ENCODE measurements at regions of chr6 and their contacts with region 1.

Region 1: DNA sequence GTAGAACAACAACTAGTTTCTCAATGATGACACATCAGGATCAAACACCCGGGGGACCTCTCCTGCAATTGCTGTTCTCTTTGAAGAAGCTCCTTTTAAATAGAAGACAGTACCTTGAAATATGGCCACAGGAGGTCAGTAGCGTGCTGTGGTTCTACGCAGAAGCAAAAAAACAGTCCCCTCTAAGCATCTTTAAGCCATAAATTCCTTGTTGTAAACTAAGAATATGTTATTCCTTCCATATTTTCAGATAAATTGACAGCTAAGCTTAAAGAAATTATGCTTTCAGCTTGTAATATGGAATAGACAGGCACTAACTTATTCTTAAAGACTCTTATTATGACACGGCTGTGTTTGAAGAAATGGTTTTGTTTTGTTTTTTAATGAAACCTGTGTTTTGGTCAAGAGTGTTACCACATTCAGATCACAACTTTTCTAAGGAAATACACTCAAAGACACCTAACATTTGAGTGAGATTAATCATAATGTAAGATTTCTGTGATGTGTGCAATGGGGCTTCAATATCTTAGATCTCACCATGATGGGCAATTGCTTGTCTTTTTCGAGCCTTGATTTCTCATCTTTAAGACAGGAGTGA is 49.7 kb upstream of the IL20RA start:
- DNase-seq: peak; percentile 73
- ATAC-seq: peak; percentile 76
- H3K4me3 Mint-ChIP-seq: no peak overlapping the region
- H3K27ac Mint-ChIP-seq: no peak overlapping the region
- H3K4me1 Mint-ChIP-seq: peaks cover 17% of the 10 kb centered on the region
- H3K27me3 Mint-ChIP-seq: peaks cover 2% of the 10 kb centered on the region

Region 2: DNA sequence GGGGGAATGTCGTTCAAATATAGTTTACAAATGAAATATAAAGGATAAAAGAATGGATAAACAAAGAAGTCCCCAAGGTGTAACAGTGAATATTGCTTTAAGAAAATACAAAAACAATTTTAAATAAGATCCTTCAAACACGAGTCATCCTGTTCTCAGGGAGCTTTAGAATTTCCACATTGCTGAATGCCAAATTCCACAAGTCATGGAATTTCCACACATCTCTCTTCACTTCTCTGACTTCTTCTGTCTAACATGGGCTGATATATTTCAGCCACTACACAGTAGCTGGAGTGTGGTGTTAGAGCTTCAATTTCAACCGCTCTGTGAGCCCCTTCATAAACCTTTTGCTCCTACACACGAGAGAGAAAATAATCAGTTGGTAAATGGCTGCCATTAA is 50.9 kb after region 1 on chr6:
- CTCF ChIA-PET with region 1: no interaction called
- POLR2A ChIA-PET with region 1: no interaction called
- intact Hi-C with region 1: no loop called
- DNase-seq: no peak
- ATAC-seq: no peak
- H3K4me3 Mint-ChIP-seq: no peak overlapping the region
- H3K27ac Mint-ChIP-seq: no peak overlapping the region
- H3K4me1 Mint-ChIP-seq: peaks cover 3% of the 10 kb centered on the region
- H3K27me3 Mint-ChIP-seq: peaks cover 3% of the 10 kb centered on the region

Region 3: DNA sequence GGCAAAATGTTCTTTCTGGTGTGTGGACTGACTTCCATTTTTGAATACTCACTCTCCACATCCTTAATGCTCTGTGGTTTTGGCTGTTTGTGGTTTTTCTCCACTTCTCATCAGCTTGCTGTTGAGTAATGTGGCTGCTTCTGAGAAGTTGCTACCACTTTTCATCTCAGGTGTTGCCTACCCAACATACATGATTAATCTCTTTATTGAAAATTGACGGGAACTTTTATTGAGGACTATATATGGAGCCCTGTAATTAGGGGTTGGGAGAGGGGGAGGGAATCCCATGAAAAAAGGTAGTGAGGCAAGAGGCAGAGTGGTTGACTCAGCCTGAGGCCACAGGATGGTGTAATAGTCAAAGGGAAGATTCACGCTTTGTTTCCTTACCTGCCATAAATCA is 61.3 kb after region 1 on chr6:
- CTCF ChIA-PET with region 1: no interaction called
- POLR2A ChIA-PET with region 1: no interaction called
- intact Hi-C with region 1: loop called in 1 of 2 experiments (anchors 5 kb)
- DNase-seq: peak; percentile 54
- ATAC-seq: peak; percentile 96
- H3K4me3 Mint-ChIP-seq: no peak overlapping the region
- H3K27ac Mint-ChIP-seq: peak overlapping the region; percentile 44
- H3K4me1 Mint-ChIP-seq: peaks cover 16% of the 10 kb centered on the region
- H3K27me3 Mint-ChIP-seq: peaks cover 21% of the 10 kb centered on the region

Region 4: DNA sequence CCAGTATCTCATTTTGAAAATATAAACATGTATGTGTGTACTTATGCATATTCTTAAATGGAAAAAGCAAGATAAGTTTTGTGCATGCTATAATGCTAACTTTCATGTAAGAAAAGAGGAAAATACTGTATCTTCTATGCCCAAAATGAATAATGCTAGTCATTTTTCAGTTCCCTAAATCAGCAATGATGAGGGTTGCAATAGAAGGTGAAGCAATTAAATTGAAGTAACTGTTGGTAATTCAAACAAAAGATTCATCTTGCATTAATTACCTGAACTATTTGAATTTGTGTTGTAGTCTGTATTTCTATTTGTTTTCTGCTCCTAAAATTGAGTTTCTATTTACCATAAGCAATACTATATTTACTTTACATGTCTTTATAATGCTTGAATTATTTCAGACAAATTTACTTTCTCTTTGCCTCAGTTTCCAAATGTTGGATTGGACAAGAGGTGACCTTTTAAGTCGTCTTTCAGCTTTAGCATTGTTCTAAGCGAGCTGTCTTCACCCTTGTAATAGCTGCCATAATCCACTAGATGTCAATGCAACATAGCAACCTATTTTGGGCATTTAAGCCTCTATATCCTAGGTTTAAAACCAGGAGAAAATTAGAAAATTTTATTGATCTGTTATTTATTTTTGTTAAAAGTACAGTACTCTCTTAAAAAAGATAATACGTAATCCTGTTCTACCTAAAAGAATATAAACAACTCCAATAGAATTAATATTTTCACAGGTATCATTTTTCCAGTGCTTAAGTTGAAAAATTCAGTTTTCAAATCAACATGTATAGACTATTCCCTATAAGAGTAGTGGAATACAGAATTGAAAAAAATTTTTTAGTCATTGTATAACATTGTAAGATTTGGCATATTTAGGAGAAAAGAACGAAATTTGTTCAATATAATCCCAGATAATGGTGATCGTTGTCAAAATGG is 177.0 kb after region 1 on chr6:
- CTCF ChIA-PET with region 1: interaction called, 10 read pairs
- POLR2A ChIA-PET with region 1: no interaction called
- intact Hi-C with region 1: loop called (anchors 5 kb)
- DNase-seq: no peak
- ATAC-seq: peak; percentile 51
- H3K4me3 Mint-ChIP-seq: no peak overlapping the region
- H3K27ac Mint-ChIP-seq: no peak overlapping the region
- H3K4me1 Mint-ChIP-seq: peaks cover 3% of the 10 kb centered on the region
- H3K27me3 Mint-ChIP-seq: peaks cover 8% of the 10 kb centered on the region

Region 5: DNA sequence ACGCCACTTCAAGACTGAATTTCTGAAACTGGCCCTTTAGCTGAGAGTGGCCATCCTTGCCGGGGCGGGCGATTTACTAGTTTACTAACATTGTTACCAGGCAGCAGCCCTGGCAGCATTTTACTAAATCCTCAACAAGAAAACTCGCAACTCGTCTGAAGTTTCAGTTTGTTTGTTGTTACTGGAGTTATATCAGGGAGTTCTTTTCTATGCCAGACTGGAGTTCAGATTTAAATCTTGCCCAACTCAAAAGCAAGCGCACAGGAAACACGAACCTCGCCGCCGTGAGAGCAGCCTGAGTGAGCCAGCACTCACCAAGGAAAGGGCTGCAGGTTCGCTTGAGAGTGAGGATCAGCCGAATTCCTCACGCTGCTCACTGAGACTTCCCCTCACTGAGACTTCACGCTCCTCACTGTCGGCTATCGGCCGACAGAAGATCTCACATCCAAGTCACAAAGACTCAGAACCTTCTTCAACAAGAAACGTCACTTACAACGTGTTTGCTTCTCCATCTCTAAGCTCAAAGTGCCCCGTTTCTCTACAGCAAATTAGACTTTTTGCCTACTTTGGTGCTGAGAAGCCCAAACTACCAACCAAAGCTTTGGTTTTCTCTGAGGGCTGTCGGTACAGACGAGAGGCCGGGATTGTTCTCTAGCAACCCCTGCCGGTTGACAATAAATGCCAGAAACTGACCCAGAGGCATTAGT is 320.8 kb after region 1 on chr6:
- CTCF ChIA-PET with region 1: interaction called, 5 read pairs
- POLR2A ChIA-PET with region 1: no interaction called
- intact Hi-C with region 1: loop called (anchors 1 to 10 kb)
- DNase-seq: peak; percentile 77
- ATAC-seq: peak; percentile 95
- H3K4me3 Mint-ChIP-seq: peak overlapping the region; percentile 65
- H3K27ac Mint-ChIP-seq: peak overlapping the region; percentile 58
- H3K4me1 Mint-ChIP-seq: peaks cover 12% of the 10 kb centered on the region
- H3K27me3 Mint-ChIP-seq: peaks cover 2% of the 10 kb centered on the region

Region 6: DNA sequence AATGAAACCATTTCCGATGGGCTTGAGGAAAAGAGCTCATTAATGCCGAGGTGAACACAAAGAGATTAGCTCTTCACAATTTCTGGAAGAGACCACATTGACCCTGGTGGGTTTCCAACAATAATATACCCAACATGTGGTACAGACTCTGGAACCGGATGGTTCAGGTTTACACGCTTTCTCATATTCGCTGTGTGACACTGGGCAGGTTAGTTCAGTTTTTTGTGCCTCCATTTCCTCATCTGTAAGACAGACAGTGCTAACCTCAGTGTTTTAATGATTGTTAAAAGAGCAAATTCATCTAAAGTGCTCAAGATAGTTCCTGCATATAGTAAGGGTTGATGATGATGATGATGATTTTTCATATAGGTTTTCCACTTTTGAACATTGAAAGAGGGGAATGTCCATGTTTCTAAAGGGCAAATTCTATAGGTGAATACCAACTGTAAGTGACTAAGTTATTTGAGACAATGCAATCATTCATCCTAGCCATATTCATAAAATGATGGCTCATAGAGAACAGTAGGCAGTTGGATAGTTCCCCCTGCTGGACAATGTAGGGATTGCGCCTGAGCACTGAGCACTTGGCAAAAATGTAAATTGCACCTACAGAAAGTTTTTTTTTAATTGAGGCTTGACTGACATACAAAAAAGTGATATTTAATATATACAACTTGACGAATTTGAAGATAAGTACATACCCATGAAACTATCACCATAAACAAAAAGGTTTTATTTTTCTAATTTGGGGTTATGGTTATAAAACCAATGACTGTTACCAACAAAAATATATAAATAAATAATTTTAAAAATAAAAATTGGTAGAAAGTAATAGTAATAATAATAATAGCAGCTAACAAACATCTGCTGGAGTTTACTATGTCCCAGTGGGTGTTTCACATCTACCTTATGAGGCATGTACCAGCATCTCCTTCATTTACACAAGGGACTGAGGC is 1014.8 kb after region 1 on chr6:
- CTCF ChIA-PET with region 1: no interaction called
- POLR2A ChIA-PET with region 1: no interaction called
- intact Hi-C with region 1: loop called in 1 of 2 experiments (anchors 10 kb)
- DNase-seq: peak; percentile 89
- ATAC-seq: peak; percentile 49
- H3K4me3 Mint-ChIP-seq: no peak overlapping the region
- H3K27ac Mint-ChIP-seq: no peak overlapping the region
- H3K4me1 Mint-ChIP-seq: peaks cover 14% of the 10 kb centered on the region
- H3K27me3 Mint-ChIP-seq: peaks cover 34% of the 10 kb centered on the region